Breast epithelium (tissue), 4 donors: ENCODE measurements at regions of chr17 and their contacts with region 1.

Region 1: GRCh38 chr17:58303971-58304725 is 23.4 kb upstream of the MPO start:
- DNase-seq: peak in 1 of 2 donors; percentile 15
- H3K4me3 ChIP-seq: no peak overlapping the region
- H3K27ac ChIP-seq: no peak overlapping the region
- H3K4me1 ChIP-seq: no peaks in the 10 kb centered on the region
- H3K27me3 ChIP-seq: no peaks in the 10 kb centered on the region
- CTCF ChIP-seq: peak; percentile 41 to 64 (median 52)
- POLR2A ChIP-seq: no peak

Region 2: DNA sequence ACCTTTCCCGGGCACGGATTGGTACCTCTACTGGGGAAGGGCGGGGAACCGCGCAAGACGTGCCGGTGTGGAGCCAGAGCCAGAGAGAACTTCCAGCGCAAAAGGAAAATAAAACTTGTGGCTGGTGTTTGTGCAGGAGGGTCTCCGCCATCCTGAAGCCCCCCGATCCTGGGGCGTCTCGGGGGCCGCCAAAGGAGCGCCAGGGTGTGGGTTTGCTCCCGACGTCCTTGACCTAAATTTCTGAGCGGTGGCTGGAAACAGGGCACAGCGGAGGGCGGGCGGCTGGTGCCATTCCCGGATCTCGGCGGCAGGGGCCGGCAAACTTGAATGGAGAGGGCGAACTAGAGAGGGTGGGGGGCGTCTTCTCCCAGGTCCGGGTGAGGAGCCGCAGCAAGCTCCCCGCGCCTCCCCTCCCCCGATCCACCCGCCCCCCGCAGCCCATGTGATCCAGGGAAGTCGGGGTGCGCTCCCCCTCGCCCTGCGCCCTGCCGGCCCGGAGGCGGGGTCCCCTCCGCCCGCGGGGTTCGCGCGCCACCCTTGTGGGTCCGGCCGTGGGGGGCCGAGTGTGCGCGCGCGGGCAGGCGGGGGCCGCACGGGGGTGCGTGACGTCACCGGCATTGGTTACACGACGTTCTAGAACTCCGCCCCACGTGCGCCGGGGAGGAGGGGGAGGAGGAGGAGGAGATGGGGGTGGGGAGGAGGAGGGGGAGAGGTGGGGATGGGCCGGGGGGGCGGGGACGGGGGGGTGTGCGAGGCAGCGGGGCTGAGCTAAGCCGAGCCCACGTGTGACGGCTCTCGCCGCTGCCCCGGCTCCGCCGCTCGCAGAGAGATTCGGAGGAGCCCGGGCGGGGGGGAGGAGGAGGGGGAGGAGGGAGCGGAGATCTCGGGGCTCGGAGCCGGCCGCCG is 1048.1 kb before region 1 on chr17 and contains the start of gene MSI2:
- intact Hi-C with region 1: loop called (anchors 5 kb)
- DNase-seq: peak; percentile 87 to 93
- H3K4me3 ChIP-seq: peak within 1 kb of the TSS; percentile 87 to 95 (median 92)
- H3K27ac ChIP-seq: peak within 1 kb of the TSS; percentile 98 to 99
- H3K4me1 ChIP-seq: peaks cover 4 to 5% of the 10 kb centered on the region in 2 donors
- H3K27me3 ChIP-seq: no peaks in the 10 kb centered on the region
- CTCF ChIP-seq: no peak
- POLR2A ChIP-seq: no peak
- total RNA-seq, gene MSI2: 13.4 to 89.1 (median 71.1) TPM

Region 3: DNA sequence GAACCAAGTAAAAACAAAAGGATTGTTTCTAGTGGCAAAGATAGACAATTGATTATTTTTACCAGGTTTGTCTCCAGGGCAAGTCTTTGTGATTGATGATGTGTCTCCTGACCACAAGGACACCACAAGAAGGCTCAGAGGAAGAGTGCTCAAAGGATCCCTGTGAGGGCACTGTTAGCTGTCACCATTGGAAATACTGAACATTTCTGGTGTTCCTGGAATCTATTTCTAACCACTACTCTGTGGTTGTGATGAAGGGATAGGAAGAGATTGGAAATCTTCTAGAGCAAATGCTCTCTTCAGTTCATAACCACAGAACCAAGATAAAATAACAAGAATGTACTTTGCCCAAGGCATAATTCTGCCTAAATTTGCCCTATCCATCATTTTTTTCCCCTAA is 97.9 kb after region 1 on chr17:
- intact Hi-C with region 1: no loop called
- DNase-seq: no peak
- H3K4me3 ChIP-seq: no peak overlapping the region
- H3K27ac ChIP-seq: peak overlapping the region; percentile 70 to 79
- H3K4me1 ChIP-seq: no peaks in the 10 kb centered on the region
- H3K27me3 ChIP-seq: no peaks in the 10 kb centered on the region
- CTCF ChIP-seq: no peak
- POLR2A ChIP-seq: no peak